Naive thymus-derived CD4-positive, alpha-beta T cell (primary cell): ENCODE measurements at regions of chr19 and their contacts with region 1.

Region 1: GRCh38 chr19:16382775-16383543 is 58.3 kb downstream of the KLF2 start:
- DNase-seq: peak; percentile 63 to 81 (median 75)
- ATAC-seq: peak; percentile 82
- H3K4me3 ChIP-seq: peak overlapping the region; percentile 44
- H3K4me3 Mint-ChIP-seq: peak overlapping the region; percentile 61 to 84 (median 70)
- H3K27ac ChIP-seq: peak overlapping the region; percentile 84
- H3K27ac Mint-ChIP-seq: peak overlapping the region in 7 of 9 donors; percentile 87 to 98 (median 97)
- H3K4me1 ChIP-seq: peaks cover 37 to 53% of the 10 kb centered on the region in 2 donors
- H3K4me1 Mint-ChIP-seq: peaks cover 36 to 81% (median 63%) of the 10 kb centered on the region in 7 donors
- H3K27me3 ChIP-seq: no peaks in the 10 kb centered on the region
- H3K27me3 Mint-ChIP-seq: no peaks in the 10 kb centered on the region

Region 2: GRCh38 chr19:16252459-16253205 is 130.3 kb before region 1 on chr19:
- CTCF ChIA-PET with region 1: interaction called, 85 read pairs
- POLR2A ChIA-PET with region 1: interaction called, 87 read pairs
- intact Hi-C with region 1: loop called (anchors 1 kb)
- DNase-seq: no peak
- ATAC-seq: peak; percentile 52
- H3K4me3 ChIP-seq: no peak overlapping the region
- H3K4me3 Mint-ChIP-seq: no peak overlapping the region
- H3K27ac ChIP-seq: no peak overlapping the region
- H3K27ac Mint-ChIP-seq: peak overlapping the region in 3 of 9 donors; percentile 16 to 34 (median 27)
- H3K4me1 ChIP-seq: peaks cover 10 to 19% of the 10 kb centered on the region in 2 donors
- H3K4me1 Mint-ChIP-seq: peaks cover 4 to 23% (median 15%) of the 10 kb centered on the region in 7 donors
- H3K27me3 ChIP-seq: no peaks in the 10 kb centered on the region
- H3K27me3 Mint-ChIP-seq: peaks cover 0 to 3% (median 0%) of the 10 kb centered on the region in 5 donors

Region 3: DNA sequence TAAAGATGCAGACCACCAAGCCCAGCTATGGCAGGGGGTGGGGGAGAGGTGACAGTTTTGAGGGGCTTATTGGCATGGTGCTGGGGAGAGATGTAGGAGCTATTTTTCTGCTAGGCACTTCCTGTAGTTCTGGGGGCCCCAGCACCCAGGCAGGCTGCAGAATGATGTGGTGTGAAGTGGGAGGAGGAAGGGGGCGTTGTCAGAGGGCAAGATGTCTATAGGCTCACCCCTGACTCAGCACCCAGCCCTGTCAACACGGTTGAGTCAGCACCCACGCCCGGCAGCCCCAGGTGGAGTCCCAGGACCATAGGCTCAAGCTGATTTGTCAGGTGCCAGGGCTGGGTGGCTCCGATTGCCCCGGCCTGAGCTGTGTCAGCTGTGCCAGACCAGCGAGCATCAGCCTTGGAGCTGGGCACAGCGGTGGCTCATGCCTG is 52.6 kb before region 1 on chr19:
- CTCF ChIA-PET with region 1: interaction called, 70 read pairs
- POLR2A ChIA-PET with region 1: interaction called, 4,370 read pairs
- intact Hi-C with region 1: loop called in 1 of 2 experiments (anchors 1 kb)
- DNase-seq: peak; percentile 76 to 96 (median 92)
- ATAC-seq: peak; percentile 74
- H3K4me3 ChIP-seq: no peak overlapping the region
- H3K4me3 Mint-ChIP-seq: peak overlapping the region; percentile 89 to 99 (median 97)
- H3K27ac ChIP-seq: peak overlapping the region; percentile 98
- H3K27ac Mint-ChIP-seq: peak overlapping the region; percentile 95 to 100 (median 98)
- H3K4me1 ChIP-seq: peaks cover 21 to 37% of the 10 kb centered on the region in 2 donors
- H3K4me1 Mint-ChIP-seq: peaks cover 17 to 62% (median 44%) of the 10 kb centered on the region in 7 donors
- H3K27me3 ChIP-seq: no peaks in the 10 kb centered on the region
- H3K27me3 Mint-ChIP-seq: peaks cover 0 to 36% (median 0%) of the 10 kb centered on the region in 5 donors

Region 4: GRCh38 chr19:16361254-16361653 is 21.7 kb before region 1 on chr19:
- CTCF ChIA-PET with region 1: interaction called, 140 read pairs
- POLR2A ChIA-PET with region 1: interaction called, 1,067 read pairs
- intact Hi-C with region 1: no loop called
- DNase-seq: no peak
- ATAC-seq: no peak
- H3K4me3 ChIP-seq: no peak overlapping the region
- H3K4me3 Mint-ChIP-seq: peak overlapping the region; percentile 60 to 89 (median 78)
- H3K27ac ChIP-seq: peak overlapping the region; percentile 56
- H3K27ac Mint-ChIP-seq: peak overlapping the region in 7 of 9 donors; percentile 84 to 97 (median 93)
- H3K4me1 ChIP-seq: peaks cover 55 to 98% of the 10 kb centered on the region in 2 donors
- H3K4me1 Mint-ChIP-seq: peaks cover 78 to 99% (median 83%) of the 10 kb centered on the region in 7 donors
- H3K27me3 ChIP-seq: no peaks in the 10 kb centered on the region
- H3K27me3 Mint-ChIP-seq: peaks cover 0 to 4% (median 0%) of the 10 kb centered on the region in 5 donors

Region 5: GRCh38 chr19:16417660-16418596 is 35.0 kb after region 1 on chr19:
- CTCF ChIA-PET with region 1: interaction called, 19 read pairs
- POLR2A ChIA-PET with region 1: interaction called, 5 read pairs
- intact Hi-C with region 1: loop called in 1 of 2 experiments (anchors 1 kb)
- DNase-seq: peak; percentile 62 to 82 (median 66)
- ATAC-seq: peak; percentile 93
- H3K4me3 ChIP-seq: no peak overlapping the region
- H3K4me3 Mint-ChIP-seq: no peak overlapping the region
- H3K27ac ChIP-seq: no peak overlapping the region
- H3K27ac Mint-ChIP-seq: peak overlapping the region in 5 of 9 donors; percentile 28 to 72 (median 63)
- H3K4me1 ChIP-seq: no peaks in the 10 kb centered on the region
- H3K4me1 Mint-ChIP-seq: peaks cover 2 to 14% (median 6%) of the 10 kb centered on the region in 7 donors
- H3K27me3 ChIP-seq: no peaks in the 10 kb centered on the region
- H3K27me3 Mint-ChIP-seq: no peaks in the 10 kb centered on the region

Region 6: DNA sequence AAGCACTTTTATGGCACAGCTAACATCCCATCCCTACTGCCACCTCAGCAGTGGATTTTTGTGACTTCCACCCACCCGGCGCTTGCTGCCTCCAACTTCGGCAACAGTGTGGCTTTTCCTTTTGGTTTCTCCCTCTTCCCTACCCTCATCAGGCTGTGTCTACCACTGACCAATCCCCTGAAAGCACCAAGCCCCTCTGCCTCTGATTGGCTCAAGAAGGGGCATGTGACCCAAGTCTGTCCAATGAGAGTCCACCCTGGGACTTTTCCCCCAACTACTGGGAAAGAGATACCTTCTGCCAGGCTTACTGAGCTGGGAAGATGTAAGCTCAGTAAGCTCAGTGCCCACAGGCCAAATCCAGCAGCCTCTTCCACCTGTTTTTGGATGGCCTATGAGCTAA is 271.2 kb after region 1 on chr19:
- CTCF ChIA-PET with region 1: no interaction called
- POLR2A ChIA-PET with region 1: no interaction called
- intact Hi-C with region 1: no loop called
- DNase-seq: no peak
- ATAC-seq: no peak
- H3K4me3 ChIP-seq: no peak overlapping the region
- H3K4me3 Mint-ChIP-seq: no peak overlapping the region
- H3K27ac ChIP-seq: no peak overlapping the region
- H3K27ac Mint-ChIP-seq: peak overlapping the region in 1 of 9 donors; percentile 72
- H3K4me1 ChIP-seq: peaks cover 7 to 20% of the 10 kb centered on the region in 2 donors
- H3K4me1 Mint-ChIP-seq: peaks cover 28 to 50% (median 39%) of the 10 kb centered on the region in 7 donors
- H3K27me3 ChIP-seq: no peaks in the 10 kb centered on the region
- H3K27me3 Mint-ChIP-seq: no peaks in the 10 kb centered on the region